ENCODE measurements at regions of chr4 and their contacts with region 1.

Region 1: GRCh38 chr4:56004235-56004634 is 55.5 kb downstream of the CEP135 start:
- DNase-seq: peak; percentile 75
- ATAC-seq: peak; percentile 99
- H3K4me3 ChIP-seq: no peak overlapping the region
- H3K27ac ChIP-seq: peak overlapping the region; percentile 55
- H3K4me1 ChIP-seq: peaks cover 31% of the 10 kb centered on the region
- H3K27me3 ChIP-seq: no peaks in the 10 kb centered on the region
- CTCF ChIP-seq: no peak
- EP300 ChIP-seq: peak in 1 of 2 experiments; percentile 63; a peak in 2 of 4 replicates
- POLR2A ChIP-seq: no peak
- RAD21 ChIP-seq: no peak

Region 2: DNA sequence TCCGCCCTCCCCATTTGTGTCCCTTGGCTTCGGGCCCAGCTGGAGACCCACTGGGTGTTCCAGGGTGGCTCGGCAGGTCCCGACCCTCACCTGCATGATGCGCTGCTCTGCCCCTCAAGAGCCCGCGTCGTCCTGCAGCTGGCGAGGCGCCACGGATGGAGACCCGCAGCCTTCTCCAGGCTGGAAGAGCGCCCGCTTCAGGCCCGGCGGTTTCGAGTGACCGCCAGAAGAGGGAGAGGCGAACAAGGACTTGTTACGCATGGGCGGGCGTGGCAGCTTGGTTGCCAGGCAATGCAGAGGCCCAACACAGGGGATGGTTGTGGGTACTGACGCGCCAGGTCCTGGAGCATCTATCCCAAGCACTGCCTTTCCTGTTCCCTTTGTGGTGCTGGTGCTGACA is 412.2 kb before region 1 on chr4 and contains the start of gene PDCL2:
- CTCF ChIA-PET with region 1: no interaction called
- POLR2A ChIA-PET with region 1: no interaction called
- in situ Hi-C with region 1: no loop called
- intact Hi-C with region 1: no loop called
- DNase-seq: no peak
- ATAC-seq: no peak
- H3K4me3 ChIP-seq: no peak within 1 kb of the TSS
- H3K27ac ChIP-seq: no peak within 1 kb of the TSS
- H3K4me1 ChIP-seq: no peaks in the 10 kb centered on the region
- H3K27me3 ChIP-seq: no peaks in the 10 kb centered on the region
- CTCF ChIP-seq: no peak
- EP300 ChIP-seq: no peak
- POLR2A ChIP-seq: no peak
- RAD21 ChIP-seq: no peak
- total RNA-seq, gene PDCL2: not detected in 2 replicates

Region 3: DNA sequence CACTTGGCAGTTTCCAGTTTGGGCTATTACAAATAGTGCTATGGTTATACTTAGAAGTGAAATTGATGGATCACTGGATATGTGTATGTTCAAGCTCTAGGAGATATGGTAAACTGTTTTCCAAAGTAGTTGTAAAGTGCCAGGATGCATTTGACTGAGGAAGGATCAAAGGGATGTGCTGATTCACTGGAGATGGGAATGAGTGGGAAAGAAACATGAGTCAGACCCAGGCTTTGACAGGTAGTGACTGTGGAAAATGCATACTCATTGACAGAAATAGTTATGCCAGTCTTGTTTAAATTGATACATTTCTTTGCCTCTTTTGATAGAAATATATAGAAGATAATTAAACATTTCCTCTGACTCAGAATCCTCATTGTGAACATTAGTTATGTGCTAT is 22.4 kb after region 1 on chr4:
- CTCF ChIA-PET with region 1: no interaction called
- POLR2A ChIA-PET with region 1: no interaction called
- in situ Hi-C with region 1: no loop called
- intact Hi-C with region 1: loop called (anchors 2 kb)
- DNase-seq: no peak
- ATAC-seq: no peak
- H3K4me3 ChIP-seq: no peak overlapping the region
- H3K27ac ChIP-seq: no peak overlapping the region
- H3K4me1 ChIP-seq: no peaks in the 10 kb centered on the region
- H3K27me3 ChIP-seq: no peaks in the 10 kb centered on the region
- CTCF ChIP-seq: no peak
- EP300 ChIP-seq: no peak
- POLR2A ChIP-seq: no peak
- RAD21 ChIP-seq: no peak

Region 4: GRCh38 chr4:56040842-56041241 is 36.6 kb after region 1 on chr4:
- CTCF ChIA-PET with region 1: no interaction called
- POLR2A ChIA-PET with region 1: no interaction called
- in situ Hi-C with region 1: no loop called
- intact Hi-C with region 1: loop called (anchors 5 kb)
- DNase-seq: no peak
- ATAC-seq: peak; percentile 62
- H3K4me3 ChIP-seq: no peak overlapping the region
- H3K27ac ChIP-seq: no peak overlapping the region
- H3K4me1 ChIP-seq: peaks cover 33% of the 10 kb centered on the region
- H3K27me3 ChIP-seq: no peaks in the 10 kb centered on the region
- CTCF ChIP-seq: no peak
- EP300 ChIP-seq: no peak
- POLR2A ChIP-seq: no peak
- RAD21 ChIP-seq: no peak